ENCODE measurements at regions of chr14 and their contacts with region 1.

Region 1: DNA sequence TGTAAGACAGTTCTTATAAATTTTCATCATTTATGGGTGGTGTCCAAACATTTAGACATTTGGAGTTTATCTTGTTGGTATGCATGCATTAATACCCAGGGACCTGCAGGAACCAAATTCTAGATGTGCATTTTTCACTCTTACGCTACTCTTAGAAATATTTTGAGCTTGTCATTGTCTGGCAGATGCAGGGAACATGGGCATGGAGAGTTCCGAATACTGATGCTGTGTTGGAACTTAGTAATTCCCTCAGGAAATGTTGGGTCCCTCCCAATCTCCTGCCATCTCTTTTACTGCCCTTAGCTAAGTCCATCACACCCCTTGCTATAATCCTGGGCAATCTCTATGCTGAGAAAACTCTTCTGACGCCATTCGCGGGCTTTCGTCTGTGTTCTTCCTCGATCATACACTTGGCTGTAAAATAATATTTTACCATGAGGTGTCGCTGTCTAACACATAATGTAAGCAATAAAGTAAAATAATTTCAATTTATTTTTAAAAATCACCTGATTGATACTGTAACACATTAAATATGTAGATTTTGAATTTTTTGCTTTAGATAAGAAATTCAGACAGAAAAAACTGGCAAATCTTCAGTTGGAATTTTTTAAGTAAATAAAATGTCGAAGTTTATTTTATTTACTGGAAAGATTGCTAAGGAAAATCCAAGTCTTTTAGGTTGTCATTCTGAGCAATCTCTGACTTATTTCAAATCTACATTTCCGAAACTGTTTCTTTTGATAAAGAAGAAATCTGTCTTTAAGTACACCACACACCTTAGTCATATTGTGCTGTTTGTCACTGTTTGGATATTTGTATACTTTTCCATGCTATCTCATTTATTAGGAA is 304.1 kb upstream of the SSTR1 start:
- DNase-seq: peak; percentile 10
- H3K4me3 ChIP-seq: no peak overlapping the region
- H3K27ac ChIP-seq: no peak overlapping the region
- H3K27me3 ChIP-seq: peaks cover 2% of the 10 kb centered on the region
- CTCF ChIP-seq: peak; percentile 56

Region 2: DNA sequence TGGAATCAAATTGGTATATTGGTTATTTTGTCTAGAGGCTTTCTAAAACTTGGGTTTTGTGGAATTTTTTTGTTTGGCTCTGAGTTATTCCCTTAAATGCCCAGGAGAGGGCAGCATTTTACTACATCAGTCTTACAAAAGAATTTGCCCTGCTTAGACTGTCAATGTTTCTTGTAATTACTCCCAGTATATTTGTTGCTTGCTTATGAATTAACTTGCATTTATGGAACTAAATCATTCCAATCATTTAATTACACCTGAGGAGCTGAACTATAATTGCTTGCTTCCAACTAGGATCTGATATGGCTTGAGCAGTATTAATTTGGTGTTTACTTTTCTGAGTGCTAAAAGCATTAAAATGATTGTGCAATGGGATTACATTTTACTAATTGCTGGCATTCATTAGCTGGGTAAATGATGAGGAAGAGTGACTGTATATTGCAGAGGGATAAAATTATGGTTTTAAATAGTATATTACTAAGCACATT is 657.1 kb before region 1 on chr14:
- CTCF ChIA-PET with region 1: no interaction called
- POLR2A ChIA-PET with region 1: no interaction called
- DNase-seq: peak; percentile 27
- H3K4me3 ChIP-seq: no peak overlapping the region
- H3K27ac ChIP-seq: no peak overlapping the region
- H3K27me3 ChIP-seq: no peaks in the 10 kb centered on the region
- CTCF ChIP-seq: peak; percentile 72

Region 3: DNA sequence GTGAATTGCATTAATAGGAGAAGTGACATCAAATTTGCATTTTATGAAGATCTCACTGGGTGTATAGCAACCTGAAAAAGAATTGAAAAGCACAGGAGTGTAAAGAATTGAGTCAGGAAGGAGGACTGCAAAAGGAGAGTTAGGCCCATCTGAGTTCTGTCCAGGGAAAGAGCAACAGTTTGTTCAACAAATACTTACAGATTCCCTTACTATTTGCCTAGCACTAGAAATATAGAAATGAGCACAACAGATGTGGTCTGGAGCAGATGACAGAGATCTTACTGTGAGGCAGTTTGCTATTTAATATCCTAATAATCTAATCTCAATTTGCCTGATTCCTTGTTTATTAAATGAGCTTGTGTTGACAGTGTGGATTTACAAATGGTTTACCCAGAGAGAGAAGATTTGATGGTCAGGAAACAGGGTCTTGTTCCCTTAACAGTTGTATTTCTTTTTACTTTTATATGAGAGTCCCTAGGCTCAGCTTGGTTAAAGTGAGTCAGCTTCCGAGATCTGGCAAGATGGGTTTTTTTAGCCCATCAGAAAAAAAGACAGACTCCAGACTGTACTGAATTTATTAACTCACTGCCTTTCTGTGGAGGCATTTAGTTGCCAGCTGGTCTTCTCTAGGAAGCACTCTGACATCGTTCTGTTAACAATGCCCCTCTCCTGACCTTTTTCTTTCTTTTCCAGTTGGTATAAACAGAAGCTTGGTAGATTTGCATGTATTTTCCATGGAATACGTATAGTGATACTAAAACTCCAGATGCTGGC is 78.4 kb before region 1 on chr14:
- CTCF ChIA-PET with region 1: interaction called, 13 read pairs
- POLR2A ChIA-PET with region 1: no interaction called
- DNase-seq: no peak
- H3K4me3 ChIP-seq: no peak overlapping the region
- H3K27ac ChIP-seq: no peak overlapping the region
- H3K27me3 ChIP-seq: no peaks in the 10 kb centered on the region
- CTCF ChIP-seq: no peak

Region 4: DNA sequence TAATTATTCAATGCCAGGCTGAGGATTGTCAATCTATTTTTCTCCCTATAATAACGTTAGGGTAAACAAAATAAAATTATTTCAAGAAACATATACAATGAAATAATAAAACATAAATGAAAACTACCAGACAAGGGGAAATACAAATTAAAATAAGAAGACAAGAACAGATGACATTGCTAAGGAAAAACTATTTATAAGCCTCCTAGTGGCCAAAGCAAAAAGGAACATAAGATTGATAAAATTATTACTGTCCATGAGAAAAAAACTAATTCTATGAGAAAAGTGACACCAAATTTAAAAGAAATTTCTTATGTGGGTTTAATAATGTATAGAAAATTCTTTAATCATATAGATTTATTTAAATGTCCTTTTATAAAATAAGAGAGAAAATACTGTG is 13.5 kb before region 1 on chr14:
- CTCF ChIA-PET with region 1: interaction called, 10 read pairs
- POLR2A ChIA-PET with region 1: no interaction called
- DNase-seq: no peak
- H3K4me3 ChIP-seq: no peak overlapping the region
- H3K27ac ChIP-seq: no peak overlapping the region
- H3K27me3 ChIP-seq: no peaks in the 10 kb centered on the region
- CTCF ChIP-seq: peak; percentile 37

Region 5: GRCh38 chr14:38197001-38197783 is 293.6 kb after region 1 on chr14:
- CTCF ChIA-PET with region 1: interaction called, 47 read pairs
- POLR2A ChIA-PET with region 1: no interaction called
- DNase-seq: no peak
- H3K4me3 ChIP-seq: no peak overlapping the region
- H3K27ac ChIP-seq: no peak overlapping the region
- H3K27me3 ChIP-seq: no peaks in the 10 kb centered on the region
- CTCF ChIP-seq: peak; percentile 67

Region 6: DNA sequence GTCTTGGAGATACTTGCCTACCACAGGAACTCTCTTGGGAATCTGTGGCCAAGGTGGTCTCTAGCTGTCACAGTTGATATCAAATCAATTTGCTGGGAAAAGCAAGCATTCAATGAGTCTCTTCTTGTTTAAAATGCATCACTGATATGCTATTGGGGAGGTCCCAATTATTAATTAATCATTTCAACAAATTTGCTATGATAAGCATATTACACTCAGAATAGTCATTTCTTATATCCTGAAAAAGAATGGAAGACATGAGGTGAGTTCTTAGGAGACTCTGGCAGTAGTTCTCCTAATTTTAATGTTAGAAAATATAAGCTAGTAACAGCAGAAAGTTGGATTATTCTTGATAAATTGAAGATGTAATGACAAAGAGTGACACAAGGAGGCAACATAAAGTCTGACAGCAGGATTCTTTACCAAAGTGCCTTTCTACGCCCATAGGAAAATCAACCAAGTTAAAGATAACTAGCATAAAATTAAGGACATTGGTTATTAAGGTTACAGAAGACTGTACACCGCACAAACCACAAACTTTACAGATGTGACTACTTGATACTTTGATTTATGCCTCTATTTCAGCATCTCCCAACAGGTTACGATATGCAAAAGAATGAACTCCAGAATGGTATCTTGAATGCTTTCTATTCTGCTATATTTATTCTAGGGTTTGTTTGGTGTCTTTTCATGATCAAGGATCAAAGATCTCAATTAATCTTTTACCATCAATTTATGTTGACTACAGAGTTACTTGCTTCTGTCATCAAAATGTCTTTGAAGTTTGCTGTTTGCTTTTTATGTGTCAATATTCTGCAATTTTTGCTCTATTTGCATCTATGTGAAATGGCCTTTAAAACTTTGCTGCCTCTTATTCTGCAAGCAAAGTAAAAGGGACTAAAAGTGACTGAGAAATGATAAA is 701.9 kb after region 1 on chr14:
- CTCF ChIA-PET with region 1: interaction called, 22 read pairs
- POLR2A ChIA-PET with region 1: no interaction called
- DNase-seq: no peak
- H3K4me3 ChIP-seq: no peak overlapping the region
- H3K27ac ChIP-seq: no peak overlapping the region
- H3K27me3 ChIP-seq: no peaks in the 10 kb centered on the region
- CTCF ChIP-seq: 0 out of 2 replicates have a peak, but pooled peaks have one; percentile 1

Measured in AG04450 (cell line).